K562 (cell line): ENCODE measurements at regions of chr1 and their contacts with region 1.

Region 1: DNA sequence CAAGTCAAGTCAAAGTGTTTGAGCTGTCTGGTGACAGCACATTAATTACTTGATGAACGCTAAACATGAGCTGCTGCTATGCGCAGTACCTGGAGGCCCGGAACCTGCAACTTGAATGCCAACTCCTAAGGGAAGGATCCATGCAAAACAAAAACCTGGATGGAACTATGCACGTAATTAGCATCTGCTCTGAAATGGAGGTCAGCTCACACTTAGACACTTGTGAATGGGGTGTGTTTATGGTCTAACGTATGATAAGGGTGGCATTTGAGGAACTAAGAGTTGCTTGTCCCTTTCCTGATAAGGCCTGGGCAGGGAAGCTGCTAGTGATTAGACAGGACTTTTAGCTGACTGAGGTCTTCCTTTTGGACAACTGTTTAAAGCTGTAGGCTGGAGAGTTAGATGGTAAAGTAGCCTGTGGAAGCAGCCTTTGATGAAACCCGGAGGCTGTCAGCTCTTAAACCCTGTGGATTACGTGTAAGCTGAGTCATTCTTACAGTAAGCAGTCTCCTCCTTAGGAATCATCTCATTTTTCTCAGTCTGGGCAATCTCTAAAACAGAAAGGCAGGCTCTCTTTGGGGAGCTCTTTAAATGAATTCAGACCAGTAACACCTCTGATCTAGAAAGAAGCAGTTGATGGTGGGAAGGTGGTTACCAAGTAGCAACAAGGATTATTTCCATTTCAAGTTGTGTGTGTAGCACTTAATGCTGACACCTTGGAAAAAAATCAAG is 6.8 kb downstream of the TENT5C start:
- DNase-seq: peak; percentile 69 to 96 (median 80)
- ATAC-seq: peak; percentile 71
- H3K4me3 ChIP-seq: peak overlapping the region; percentile 9; the same call in 1 of the 2 replicates
- H3K27ac ChIP-seq: peak overlapping the region; percentile 77
- H3K4me1 ChIP-seq: peaks cover 53 to 96% of the 10 kb centered on the region in 2 experiments
- H3K27me3 ChIP-seq: no peaks in the 10 kb centered on the region
- CTCF ChIP-seq: no peak
- EP300 ChIP-seq: peak; percentile 98
- POLR2A ChIP-seq: no peak
- RAD21 ChIP-seq: peak in 1 of 2 experiments; percentile 1; a peak in 1 of 4 replicates

Region 2: DNA sequence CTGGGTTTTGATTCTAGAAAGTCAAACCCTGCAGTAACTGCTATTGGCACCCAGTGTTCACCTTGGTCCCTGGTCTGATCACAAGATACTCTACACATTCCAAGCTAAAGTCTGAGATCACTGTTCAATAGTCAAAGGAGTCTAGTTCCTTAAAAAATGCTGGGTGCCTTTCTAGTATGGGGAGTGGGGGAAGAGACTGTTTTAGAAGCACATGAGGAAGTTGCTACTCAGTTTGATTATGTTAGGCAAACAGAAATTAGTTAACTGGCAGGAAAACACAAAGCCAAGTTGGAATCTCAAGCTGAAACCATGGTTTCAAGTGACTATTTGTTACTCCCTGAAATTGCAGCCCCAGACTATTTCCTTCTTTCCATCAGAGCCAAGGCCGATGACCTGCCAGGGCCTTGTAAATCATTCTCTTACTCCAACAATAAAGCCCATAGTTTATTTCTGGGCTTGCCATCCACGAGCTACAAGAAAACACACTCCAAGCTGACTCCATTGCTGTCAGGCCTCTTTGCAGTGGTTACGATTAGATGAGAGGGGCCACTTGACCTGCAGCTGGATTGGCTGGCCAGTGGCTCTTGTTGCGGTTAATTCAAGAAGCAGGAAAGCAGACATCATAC is 380.8 kb before region 1 on chr1:
- CTCF ChIA-PET with region 1: no interaction called
- POLR2A ChIA-PET with region 1: no interaction called
- in situ Hi-C with region 1: no loop called
- intact Hi-C with region 1: no loop called
- DNase-seq: no peak
- ATAC-seq: no peak
- H3K4me3 ChIP-seq: no peak overlapping the region
- H3K27ac ChIP-seq: no peak overlapping the region
- H3K4me1 ChIP-seq: no peaks in the 10 kb centered on the region
- H3K27me3 ChIP-seq: peaks cover 0 to 4% of the 10 kb centered on the region in 2 experiments; a peak in 2 of 5 replicates
- CTCF ChIP-seq: no peak
- EP300 ChIP-seq: no peak
- POLR2A ChIP-seq: no peak
- RAD21 ChIP-seq: no peak

Region 3: GRCh38 chr1:117534995-117535467 is 77.7 kb before region 1 on chr1:
- CTCF ChIA-PET with region 1: no interaction called
- POLR2A ChIA-PET with region 1: no interaction called
- in situ Hi-C with region 1: no loop called
- intact Hi-C with region 1: loop called (anchors 5 kb)
- DNase-seq: peak; percentile 75 to 84 (median 80)
- ATAC-seq: peak; percentile 95
- H3K4me3 ChIP-seq: no peak overlapping the region
- H3K27ac ChIP-seq: no peak overlapping the region
- H3K4me1 ChIP-seq: 0 out of 5 replicates have a peak, but pooled peaks cover 0 to 4% of the 10 kb centered on the region in 2 experiments
- H3K27me3 ChIP-seq: no peaks in the 10 kb centered on the region
- CTCF ChIP-seq: peak; percentile 80 to 88 (median 88)
- EP300 ChIP-seq: no peak
- POLR2A ChIP-seq: no peak
- RAD21 ChIP-seq: peak; percentile 82 to 94

Region 4: DNA sequence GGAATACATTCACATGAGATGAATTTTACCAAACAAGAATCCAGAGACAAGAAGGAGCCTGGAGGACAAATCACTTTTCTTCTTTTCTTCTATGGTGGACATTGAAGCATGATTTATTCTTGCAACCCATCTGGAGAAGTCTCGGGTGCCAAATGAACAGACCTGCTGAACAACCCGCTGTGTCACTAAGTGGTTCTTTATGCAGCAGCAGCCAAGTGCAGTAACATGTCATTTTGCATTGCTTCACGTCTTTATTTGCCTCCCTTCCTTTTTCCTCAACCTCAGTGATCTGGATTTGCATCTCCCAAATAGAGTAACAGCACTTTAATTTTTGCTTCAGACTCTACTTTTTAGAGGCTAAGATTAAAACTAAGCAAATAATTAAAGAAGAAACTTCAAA is 56.9 kb before region 1 on chr1:
- CTCF ChIA-PET with region 1: no interaction called
- POLR2A ChIA-PET with region 1: no interaction called
- in situ Hi-C with region 1: no loop called
- intact Hi-C with region 1: no loop called
- DNase-seq: no peak
- ATAC-seq: no peak
- H3K4me3 ChIP-seq: no peak overlapping the region
- H3K27ac ChIP-seq: no peak overlapping the region
- H3K4me1 ChIP-seq: peaks cover 0 to 5% of the 10 kb centered on the region in 2 experiments; a peak in 3 of 5 replicates
- H3K27me3 ChIP-seq: no peaks in the 10 kb centered on the region
- CTCF ChIP-seq: no peak
- EP300 ChIP-seq: no peak
- POLR2A ChIP-seq: no peak
- RAD21 ChIP-seq: no peak

Region 5: GRCh38 chr1:117638759-117639158 is 26.1 kb after region 1 on chr1:
- CTCF ChIA-PET with region 1: no interaction called
- POLR2A ChIA-PET with region 1: interaction called, 383 read pairs
- in situ Hi-C with region 1: no loop called
- intact Hi-C with region 1: loop called (anchors 1 kb)
- DNase-seq: peak in 3 of 4 experiments; percentile 43 to 62 (median 58)
- ATAC-seq: peak; percentile 37; the same call in 2 of the 3 replicates
- H3K4me3 ChIP-seq: no peak overlapping the region
- H3K27ac ChIP-seq: no peak overlapping the region
- H3K4me1 ChIP-seq: peaks cover 11 to 29% of the 10 kb centered on the region in 2 experiments
- H3K27me3 ChIP-seq: no peaks in the 10 kb centered on the region
- CTCF ChIP-seq: no peak
- EP300 ChIP-seq: no peak
- POLR2A ChIP-seq: no peak
- RAD21 ChIP-seq: no peak

Region 6: GRCh38 chr1:117644696-117645311 is 32.1 kb after region 1 on chr1:
- CTCF ChIA-PET with region 1: no interaction called
- POLR2A ChIA-PET with region 1: interaction called, 27 read pairs
- in situ Hi-C with region 1: no loop called
- intact Hi-C with region 1: loop called (anchors 1 kb)
- DNase-seq: peak; percentile 86 to 92 (median 88)
- ATAC-seq: peak; percentile 94
- H3K4me3 ChIP-seq: no peak overlapping the region
- H3K27ac ChIP-seq: peak overlapping the region; percentile 24; the same call in 1 of the 3 replicates
- H3K4me1 ChIP-seq: peaks cover 32 to 39% of the 10 kb centered on the region in 2 experiments
- H3K27me3 ChIP-seq: no peaks in the 10 kb centered on the region
- CTCF ChIP-seq: peak in 2 of 3 experiments; percentile 11 to 23; a peak in 3 of 6 replicates
- EP300 ChIP-seq: peak; percentile 86
- POLR2A ChIP-seq: no peak
- RAD21 ChIP-seq: peak in 1 of 2 experiments; percentile 44; a peak in 2 of 4 replicates

Region 7: GRCh38 chr1:117654493-117655219 is 42.0 kb after region 1 on chr1:
- CTCF ChIA-PET with region 1: no interaction called
- POLR2A ChIA-PET with region 1: interaction called, 28 read pairs
- in situ Hi-C with region 1: no loop called
- intact Hi-C with region 1: no loop called
- DNase-seq: no peak
- ATAC-seq: peak; percentile 12
- H3K4me3 ChIP-seq: no peak overlapping the region
- H3K27ac ChIP-seq: peak overlapping the region; percentile 4; the same call in 1 of the 3 replicates
- H3K4me1 ChIP-seq: peaks cover 46 to 63% of the 10 kb centered on the region in 2 experiments
- H3K27me3 ChIP-seq: no peaks in the 10 kb centered on the region
- CTCF ChIP-seq: no peak
- EP300 ChIP-seq: no peak
- POLR2A ChIP-seq: no peak
- RAD21 ChIP-seq: no peak

Region 8: GRCh38 chr1:117664314-117664713 is 51.6 kb after region 1 on chr1:
- CTCF ChIA-PET with region 1: no interaction called
- POLR2A ChIA-PET with region 1: interaction called, 5 read pairs
- in situ Hi-C with region 1: no loop called
- intact Hi-C with region 1: loop called (anchors 2 kb)
- DNase-seq: peak; percentile 43 to 73 (median 56)
- ATAC-seq: peak; percentile 9; the same call in 2 of the 3 replicates
- H3K4me3 ChIP-seq: no peak overlapping the region
- H3K27ac ChIP-seq: no peak overlapping the region
- H3K4me1 ChIP-seq: peaks cover 18 to 42% of the 10 kb centered on the region in 2 experiments
- H3K27me3 ChIP-seq: no peaks in the 10 kb centered on the region
- CTCF ChIP-seq: no peak
- EP300 ChIP-seq: peak; percentile 37; the same call in 1 of the 2 replicates
- POLR2A ChIP-seq: no peak
- RAD21 ChIP-seq: no peak; a peak in 1 of 4 replicates

Region 9: DNA sequence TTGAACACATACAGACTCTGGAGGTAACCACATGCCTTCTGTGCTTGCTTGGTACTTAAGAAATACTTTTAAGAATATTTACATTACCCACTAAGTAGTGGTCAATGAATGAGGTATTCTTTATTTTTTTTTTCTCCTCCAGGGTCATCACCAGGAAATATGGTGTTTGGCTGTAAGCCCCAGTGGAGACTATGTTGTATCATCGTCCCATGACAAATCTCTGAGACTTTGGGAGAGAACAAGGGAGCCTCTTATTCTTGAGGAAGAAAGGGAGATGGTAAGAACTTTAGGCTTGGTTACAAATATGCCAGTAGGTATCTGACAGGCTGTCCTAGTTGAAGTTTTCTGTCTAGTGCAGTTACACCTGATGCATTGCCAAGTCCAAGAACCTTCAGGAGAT is 339.7 kb after region 1 on chr1:
- CTCF ChIA-PET with region 1: no interaction called
- POLR2A ChIA-PET with region 1: no interaction called
- in situ Hi-C with region 1: no loop called
- intact Hi-C with region 1: no loop called
- DNase-seq: no peak
- ATAC-seq: no peak
- H3K4me3 ChIP-seq: no peak overlapping the region
- H3K27ac ChIP-seq: no peak overlapping the region
- H3K4me1 ChIP-seq: no peaks in the 10 kb centered on the region
- H3K27me3 ChIP-seq: no peaks in the 10 kb centered on the region
- CTCF ChIP-seq: no peak
- EP300 ChIP-seq: no peak
- POLR2A ChIP-seq: no peak
- RAD21 ChIP-seq: no peak